ENCODE measurements at regions of chr20 and their contacts with region 1.

Region 1: DNA sequence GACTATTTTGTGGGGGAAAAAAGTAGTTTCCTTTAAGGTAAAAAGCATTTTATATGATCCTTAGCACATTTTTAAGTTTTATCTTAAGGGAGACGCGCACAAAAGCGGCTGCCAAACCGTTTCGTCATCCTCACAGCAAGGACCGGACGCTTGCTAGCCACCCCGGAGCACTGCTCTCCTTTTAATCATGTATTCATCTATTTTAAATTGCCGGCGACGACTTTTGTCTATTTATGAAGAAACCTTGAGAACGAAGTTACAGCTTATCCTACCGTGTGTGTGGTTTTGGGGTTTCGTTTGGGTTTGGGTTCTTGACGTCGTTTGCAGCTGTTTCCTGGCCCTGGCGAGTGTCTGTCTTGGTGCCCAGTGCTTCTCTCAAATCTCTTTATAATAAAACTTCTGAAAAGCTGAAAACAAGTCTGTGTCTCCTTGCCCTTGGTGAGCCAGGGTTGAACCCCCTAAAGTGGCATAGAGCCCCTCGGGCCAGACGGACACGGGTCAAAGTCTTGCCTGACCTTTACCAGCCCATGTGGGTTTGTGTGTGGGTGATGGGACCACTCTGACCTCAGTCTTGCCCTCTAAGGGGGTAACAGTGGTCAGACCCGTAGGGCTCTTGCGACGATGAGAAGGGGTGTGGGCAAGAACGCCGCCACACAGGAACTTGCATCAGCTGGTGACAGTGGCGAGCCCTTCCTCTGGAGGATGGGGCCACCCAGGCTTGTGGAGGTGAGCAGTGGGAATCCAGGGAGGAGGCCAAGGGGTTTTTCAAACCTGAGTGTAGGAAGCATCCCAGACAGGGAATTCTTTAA is 117.6 kb downstream of the JPH2 start:
- DNase-seq: peak; percentile 63
- H3K4me3 Mint-ChIP-seq: peak overlapping the region; percentile 77
- H3K27ac Mint-ChIP-seq: peak overlapping the region; percentile 95
- H3K4me1 Mint-ChIP-seq: peaks cover 45% of the 10 kb centered on the region
- H3K27me3 Mint-ChIP-seq: peaks cover 5% of the 10 kb centered on the region

Region 2: DNA sequence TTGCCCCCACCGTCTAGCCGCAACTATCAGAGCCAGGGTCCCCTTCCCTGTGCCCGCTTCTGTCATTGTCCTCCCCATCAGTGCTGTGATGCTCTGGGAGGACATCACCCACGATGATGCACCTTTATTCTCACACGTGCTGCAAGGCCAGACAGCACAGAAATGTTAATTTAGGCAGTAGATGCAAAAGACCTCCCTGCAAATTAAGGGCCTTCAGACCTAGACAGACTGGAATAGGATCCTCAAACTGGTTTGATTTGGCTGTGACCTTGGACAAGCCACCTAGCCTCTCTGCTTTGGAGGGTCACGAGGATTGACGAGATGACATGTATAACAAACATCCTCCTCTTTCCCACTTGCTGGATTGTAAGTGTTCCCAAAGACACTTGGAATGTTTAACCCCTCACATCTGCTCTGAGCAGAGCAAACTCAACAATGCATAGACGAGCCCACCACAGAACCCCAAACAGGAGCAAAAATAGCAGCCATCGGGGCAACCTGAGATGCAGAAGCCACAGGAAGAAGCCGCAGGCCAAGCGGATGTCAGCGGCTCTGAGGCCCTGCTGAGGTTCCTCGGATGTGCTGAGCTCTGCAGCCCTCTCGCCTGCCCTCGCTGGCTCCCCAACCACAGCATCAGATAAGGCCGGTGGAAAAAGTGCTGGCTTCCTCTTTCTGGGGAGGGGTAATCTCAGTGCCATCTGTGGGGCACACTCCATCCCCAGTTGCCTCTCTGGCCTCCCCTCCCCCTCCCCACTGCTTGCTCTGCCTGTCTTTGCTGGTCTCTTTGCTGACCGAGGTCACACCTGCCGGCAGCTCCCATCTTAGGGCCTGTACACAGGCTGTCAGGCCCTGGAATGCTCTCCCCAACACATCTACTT is 119.4 kb before region 1 on chr20:
- intact Hi-C with region 1: loop called (anchors 5 kb)
- DNase-seq: peak; percentile 87
- H3K4me3 Mint-ChIP-seq: peak overlapping the region; percentile 57
- H3K27ac Mint-ChIP-seq: peak overlapping the region; percentile 36
- H3K4me1 Mint-ChIP-seq: peaks cover 74% of the 10 kb centered on the region
- H3K27me3 Mint-ChIP-seq: peaks cover 51% of the 10 kb centered on the region

Region 3: DNA sequence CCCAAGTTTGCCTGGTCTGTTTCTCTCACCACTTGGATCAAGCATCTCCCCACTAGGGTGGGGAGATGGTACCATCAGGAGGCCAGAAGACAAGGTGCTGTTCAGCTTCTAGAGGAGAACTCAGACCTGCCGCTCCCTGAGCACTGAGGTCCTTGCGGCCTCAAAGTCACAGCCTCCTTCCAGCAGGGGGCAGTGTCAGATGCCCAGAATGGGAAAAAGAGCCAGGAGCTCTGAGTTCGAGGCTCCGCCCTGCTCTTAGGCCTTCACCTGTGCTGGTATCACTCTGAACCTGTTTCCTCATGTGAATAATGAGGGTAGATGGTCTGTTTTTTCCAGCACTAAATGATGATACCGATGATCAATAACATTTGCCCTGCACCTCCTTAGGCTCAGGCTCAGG is 86.0 kb before region 1 on chr20:
- intact Hi-C with region 1: no loop called
- DNase-seq: no peak
- H3K4me3 Mint-ChIP-seq: no peak overlapping the region
- H3K27ac Mint-ChIP-seq: no peak overlapping the region
- H3K4me1 Mint-ChIP-seq: peaks cover 26% of the 10 kb centered on the region
- H3K27me3 Mint-ChIP-seq: peaks cover 17% of the 10 kb centered on the region

Region 4: DNA sequence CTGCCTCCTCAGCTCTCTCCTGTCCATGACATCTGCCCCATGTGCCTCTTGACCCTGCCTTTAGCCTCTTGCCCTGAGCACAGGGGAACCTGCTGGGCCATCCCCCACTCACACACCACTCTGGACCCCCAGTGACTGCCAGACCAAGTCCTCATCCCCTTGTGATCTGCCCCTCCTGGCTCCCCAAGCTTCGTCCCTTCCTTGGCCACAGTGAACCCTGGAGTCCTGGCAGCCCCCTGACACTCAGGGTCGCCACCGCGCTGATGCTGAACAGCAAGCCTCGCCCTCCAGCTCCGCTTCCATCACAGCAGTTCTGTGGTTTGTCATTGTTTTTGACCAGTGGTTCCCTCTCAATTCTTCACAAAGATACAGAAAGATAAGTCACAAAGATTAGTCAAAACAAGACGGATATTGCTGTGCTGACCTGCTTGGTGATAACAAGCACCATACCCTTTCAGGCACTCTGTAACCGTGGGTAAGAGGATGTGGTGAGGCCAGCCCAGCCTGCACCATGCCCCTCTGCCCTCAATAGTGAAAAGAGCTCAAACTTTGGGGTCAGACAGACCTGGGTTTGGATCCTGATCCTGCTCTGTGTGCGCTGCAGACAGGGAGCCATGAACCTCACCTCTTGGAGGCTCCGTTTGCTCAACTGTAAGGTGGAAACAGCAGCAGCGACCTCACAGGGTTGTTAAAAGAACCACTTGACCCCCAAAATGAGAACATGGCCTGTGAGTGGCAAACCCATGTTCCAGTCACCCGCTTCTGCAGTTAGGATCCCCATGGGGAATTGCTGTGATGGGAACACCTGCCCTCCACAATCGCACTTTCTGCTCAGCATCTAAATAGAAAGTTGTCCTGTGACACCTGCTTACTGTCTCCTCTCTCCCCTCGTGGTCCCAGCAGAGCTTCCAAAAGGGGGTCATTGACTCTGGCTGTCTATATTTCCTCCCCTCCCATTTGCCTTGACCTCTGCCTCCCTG is 40.2 kb before region 1 on chr20:
- intact Hi-C with region 1: loop called (anchors 5 kb)
- DNase-seq: peak; percentile 35
- H3K4me3 Mint-ChIP-seq: peak overlapping the region; percentile 49
- H3K27ac Mint-ChIP-seq: peak overlapping the region; percentile 10
- H3K4me1 Mint-ChIP-seq: peaks cover 49% of the 10 kb centered on the region
- H3K27me3 Mint-ChIP-seq: peaks cover 51% of the 10 kb centered on the region

Measured in activated T-helper 2 cell treated with anti-CD3 and anti-CD28 coated beads, Interferon-gamma antibody, Interleukin-2, Interleukin-4, amounts not matched to agents 10 μg/mL and 5 μg/mL and 100 μg/mL, durations not matched to agents 14 hours and 24 hours and 36 hours (primary cell).